Prostate gland (tissue), 2 donors: ENCODE measurements at regions of chr6 and their contacts with region 1.

Region 1: GRCh38 chr6:163392533-163392932 is 22.0 kb upstream of the QKI start:
- DNase-seq: peak; percentile 35
- H3K4me3 ChIP-seq: no peak overlapping the region
- H3K27ac ChIP-seq: no peak overlapping the region
- H3K4me1 ChIP-seq: no peaks in the 10 kb centered on the region
- H3K27me3 ChIP-seq: no peaks in the 10 kb centered on the region
- CTCF ChIP-seq: no peak
- POLR2A ChIP-seq: no peak

Region 2: DNA sequence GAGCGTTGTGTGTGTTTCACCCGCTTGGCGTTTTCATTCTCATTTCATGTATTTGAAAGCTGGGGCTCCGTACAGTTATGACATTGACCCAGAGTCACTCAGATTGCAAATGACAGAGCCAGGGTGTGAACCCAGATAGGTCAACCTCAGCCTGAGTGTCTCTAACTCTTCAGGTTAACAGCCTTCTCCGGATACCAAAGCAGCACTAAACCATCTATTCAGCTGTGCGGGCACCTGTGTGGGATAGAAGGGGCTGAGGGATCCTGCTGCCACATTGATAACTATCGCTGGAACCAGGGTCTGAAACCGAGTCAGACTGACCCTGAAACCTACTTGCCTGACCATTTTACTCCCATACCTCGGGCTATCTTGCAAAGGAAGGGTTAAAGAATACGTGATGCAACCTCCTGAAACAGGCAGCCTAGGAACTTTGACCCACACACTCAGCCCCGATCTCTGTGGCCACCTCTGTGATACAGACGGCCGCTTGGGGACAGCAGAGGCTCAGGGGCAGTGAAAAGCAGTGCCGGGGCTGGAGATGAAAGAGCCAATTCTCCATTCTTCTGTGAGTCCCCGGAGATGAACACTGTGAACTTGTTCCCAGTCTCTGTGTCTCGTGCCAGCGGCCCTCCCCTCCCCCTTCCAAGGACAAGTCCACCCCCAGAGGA is 211.5 kb before region 1 on chr6:
- intact Hi-C with region 1: loop called (anchors 10 kb)
- DNase-seq: peak; percentile 12
- H3K4me3 ChIP-seq: no peak overlapping the region
- H3K27ac ChIP-seq: no peak overlapping the region
- H3K4me1 ChIP-seq: no peaks in the 10 kb centered on the region
- H3K27me3 ChIP-seq: no peaks in the 10 kb centered on the region
- CTCF ChIP-seq: peak in 3 of 4 experiments; percentile 16 to 52 (median 51)
- POLR2A ChIP-seq: no peak